ENCODE measurements at regions of chr16 and their contacts with region 1.

Region 1: DNA sequence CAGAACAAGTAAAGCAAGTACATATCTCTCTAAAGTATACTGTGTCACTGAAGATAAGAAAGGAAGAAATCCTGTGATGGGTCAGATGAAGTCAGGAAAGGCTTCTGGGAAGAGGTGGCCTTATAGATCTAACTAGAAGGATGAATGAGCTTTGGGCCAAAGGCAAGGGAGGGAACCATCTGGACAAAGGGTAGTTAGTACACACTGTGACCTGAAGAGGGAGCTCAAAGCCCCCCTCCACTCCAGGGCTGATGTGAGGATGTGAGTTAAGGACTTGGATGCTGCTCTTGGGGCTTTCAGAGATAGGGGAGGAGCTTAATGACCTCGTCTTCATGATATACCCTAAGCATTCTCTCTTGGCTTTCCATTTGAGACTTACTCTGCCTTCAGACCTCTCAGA is 185.3 kb upstream of the CACNG3 start:
- DNase-seq: no peak
- ATAC-seq: peak; percentile 80
- H3K4me3 Mint-ChIP-seq: no peak overlapping the region
- H3K27ac Mint-ChIP-seq: peak overlapping the region; percentile 98
- H3K4me1 Mint-ChIP-seq: peaks cover 55% of the 10 kb centered on the region
- H3K27me3 Mint-ChIP-seq: no peaks in the 10 kb centered on the region
- CTCF ChIP-seq: peak; percentile 19

Region 2: GRCh38 chr16:23678430-23679273 is 392.2 kb before region 1 on chr16 and contains the start of gene PLK1:
- CTCF ChIA-PET with region 1: no interaction called
- POLR2A ChIA-PET with region 1: no interaction called
- intact Hi-C with region 1: no loop called
- DNase-seq: peak; percentile 54
- ATAC-seq: peak; percentile 93
- H3K4me3 Mint-ChIP-seq: peak within 1 kb of the TSS; percentile 85
- H3K27ac Mint-ChIP-seq: no peak within 1 kb of the TSS
- H3K4me1 Mint-ChIP-seq: peaks cover 17% of the 10 kb centered on the region
- H3K27me3 Mint-ChIP-seq: no peaks in the 10 kb centered on the region
- CTCF ChIP-seq: no peak
- total RNA-seq, gene PLK1: 2.3 and 3.9 TPM in 2 replicates

Region 3: GRCh38 chr16:24041826-24042631 is 28.8 kb before region 1 on chr16:
- CTCF ChIA-PET with region 1: interaction called, 7 read pairs
- POLR2A ChIA-PET with region 1: interaction called, 3 read pairs
- intact Hi-C with region 1: loop called (anchors 1 kb)
- DNase-seq: peak; percentile 64
- ATAC-seq: peak; percentile 93
- H3K4me3 Mint-ChIP-seq: no peak overlapping the region
- H3K27ac Mint-ChIP-seq: peak overlapping the region; percentile 8
- H3K4me1 Mint-ChIP-seq: peaks cover 8% of the 10 kb centered on the region
- H3K27me3 Mint-ChIP-seq: no peaks in the 10 kb centered on the region
- CTCF ChIP-seq: peak; percentile 57

Region 4: DNA sequence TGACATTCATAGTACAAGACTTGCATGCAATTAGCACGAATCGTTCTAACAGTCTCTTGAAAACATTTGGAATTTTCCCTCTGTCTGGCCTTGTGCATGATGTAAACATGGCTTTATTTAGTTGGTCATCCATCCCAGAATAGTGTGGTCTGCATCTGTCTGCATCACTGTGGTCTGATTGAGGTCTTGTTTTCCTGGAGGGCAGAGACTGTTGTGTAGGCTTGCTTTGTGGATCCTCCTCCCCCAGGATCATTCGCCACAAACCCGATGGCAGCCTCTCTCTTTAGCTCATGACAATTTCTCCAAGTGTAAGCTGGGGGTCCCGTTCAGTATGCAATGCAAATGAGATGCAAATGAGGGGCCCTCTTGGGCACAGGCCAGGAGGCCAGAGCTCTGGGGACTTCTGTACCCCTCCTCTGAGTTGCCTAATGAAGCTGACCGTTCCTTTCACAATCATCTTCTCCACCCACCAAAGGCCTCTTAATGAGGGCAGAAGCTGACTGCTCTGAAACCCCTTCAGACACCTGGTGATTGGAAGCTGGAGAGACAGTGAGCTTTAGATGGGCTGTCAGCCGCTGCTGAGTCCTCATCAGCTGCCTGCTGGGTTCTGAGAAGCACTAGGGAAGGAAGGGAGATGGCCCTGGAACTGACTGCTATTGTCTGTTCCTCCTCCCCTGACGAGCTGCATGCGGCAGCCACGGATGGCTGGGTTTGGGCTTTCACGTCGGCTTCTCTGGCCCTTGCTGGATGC is 15.9 kb before region 1 on chr16:
- CTCF ChIA-PET with region 1: interaction called, 10 read pairs
- POLR2A ChIA-PET with region 1: no interaction called
- intact Hi-C with region 1: no loop called
- DNase-seq: no peak
- ATAC-seq: no peak
- H3K4me3 Mint-ChIP-seq: no peak overlapping the region
- H3K27ac Mint-ChIP-seq: peak overlapping the region; percentile 21
- H3K4me1 Mint-ChIP-seq: peaks cover 15% of the 10 kb centered on the region
- H3K27me3 Mint-ChIP-seq: no peaks in the 10 kb centered on the region
- CTCF ChIP-seq: no peak

Region 5: DNA sequence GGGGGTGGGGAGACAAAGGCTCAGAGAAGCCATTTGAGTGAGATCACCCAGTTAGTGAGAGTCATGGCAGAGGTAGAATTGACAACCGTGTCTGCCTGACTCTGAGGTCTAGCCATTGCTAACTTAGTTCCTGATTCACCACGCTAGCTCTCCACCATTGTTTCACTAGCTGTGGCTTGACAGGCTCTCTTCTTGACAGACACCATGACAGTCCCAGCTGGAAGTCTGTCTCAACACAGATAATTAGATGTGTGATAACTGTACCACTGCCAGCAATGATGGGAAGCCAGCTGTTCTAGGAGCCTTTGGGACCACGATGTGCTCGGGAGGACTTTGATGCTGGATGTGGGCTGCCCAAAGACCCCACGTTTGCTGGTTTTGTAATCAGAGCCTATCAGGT is 14.8 kb after region 1 on chr16:
- CTCF ChIA-PET with region 1: interaction called, 12 read pairs
- POLR2A ChIA-PET with region 1: no interaction called
- intact Hi-C with region 1: no loop called
- DNase-seq: no peak
- ATAC-seq: no peak
- H3K4me3 Mint-ChIP-seq: no peak overlapping the region
- H3K27ac Mint-ChIP-seq: peak overlapping the region; percentile 41
- H3K4me1 Mint-ChIP-seq: peaks cover 13% of the 10 kb centered on the region
- H3K27me3 Mint-ChIP-seq: no peaks in the 10 kb centered on the region
- CTCF ChIP-seq: no peak

Region 6: DNA sequence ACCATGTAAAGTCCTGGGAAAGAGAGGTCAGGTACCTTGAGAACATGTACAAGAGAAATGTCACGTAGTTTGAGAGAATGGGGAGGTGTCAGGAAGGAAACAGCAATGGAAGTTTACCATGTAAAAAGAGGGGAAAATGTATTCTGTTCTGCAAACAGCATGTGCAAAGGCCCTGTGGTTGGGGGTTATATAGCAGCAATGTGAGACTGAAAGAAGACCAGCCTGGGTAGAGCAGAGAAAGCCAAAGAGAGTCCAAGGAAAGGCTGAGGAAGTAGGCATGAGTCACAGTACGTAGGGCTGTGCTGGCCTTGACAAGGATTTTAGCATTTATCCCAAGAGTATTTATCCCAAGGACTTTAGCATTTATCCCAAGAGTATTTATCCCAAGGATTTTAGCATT is 44.0 kb after region 1 on chr16:
- CTCF ChIA-PET with region 1: interaction called, 4 read pairs
- POLR2A ChIA-PET with region 1: no interaction called
- intact Hi-C with region 1: loop called (anchors 5 kb)
- DNase-seq: no peak
- ATAC-seq: no peak
- H3K4me3 Mint-ChIP-seq: no peak overlapping the region
- H3K27ac Mint-ChIP-seq: no peak overlapping the region
- H3K4me1 Mint-ChIP-seq: no peaks in the 10 kb centered on the region
- H3K27me3 Mint-ChIP-seq: no peaks in the 10 kb centered on the region
- CTCF ChIP-seq: no peak

Region 7: GRCh38 chr16:24151482-24151939 is 80.7 kb after region 1 on chr16:
- CTCF ChIA-PET with region 1: interaction called, 3 read pairs
- POLR2A ChIA-PET with region 1: no interaction called
- intact Hi-C with region 1: loop called (anchors 5 kb)
- DNase-seq: no peak
- ATAC-seq: no peak
- H3K4me3 Mint-ChIP-seq: no peak overlapping the region
- H3K27ac Mint-ChIP-seq: peak overlapping the region; percentile 51
- H3K4me1 Mint-ChIP-seq: peaks cover 27% of the 10 kb centered on the region
- H3K27me3 Mint-ChIP-seq: no peaks in the 10 kb centered on the region
- CTCF ChIP-seq: no peak

Region 8: DNA sequence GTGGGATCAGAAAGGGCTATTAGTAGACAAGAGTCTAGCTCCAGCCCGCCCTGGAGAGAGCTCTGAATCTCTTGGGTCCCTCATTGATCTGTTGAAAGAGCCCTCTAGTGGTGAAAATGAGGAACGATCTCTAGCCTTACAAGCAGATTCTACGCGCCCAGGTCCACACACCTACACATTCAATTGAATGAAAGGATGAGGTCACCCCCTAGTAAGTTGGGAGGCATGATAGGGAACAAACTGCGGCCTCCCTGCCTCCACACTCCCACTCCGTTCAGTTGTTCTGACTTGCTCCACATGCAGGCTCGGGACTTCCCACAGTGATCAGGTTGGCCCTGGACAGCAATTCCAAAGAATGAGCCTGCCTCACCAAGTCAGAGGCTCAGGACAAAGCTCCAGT is 182.3 kb after region 1 on chr16:
- CTCF ChIA-PET with region 1: interaction called, 64 read pairs
- POLR2A ChIA-PET with region 1: interaction called, 13 read pairs
- intact Hi-C with region 1: loop called (anchors 1 kb)
- DNase-seq: no peak
- ATAC-seq: peak; percentile 66
- H3K4me3 Mint-ChIP-seq: no peak overlapping the region
- H3K27ac Mint-ChIP-seq: no peak overlapping the region
- H3K4me1 Mint-ChIP-seq: peaks cover 7% of the 10 kb centered on the region
- H3K27me3 Mint-ChIP-seq: peaks cover 54% of the 10 kb centered on the region
- CTCF ChIP-seq: no peak

Measured in activated B cell treated with CpG ODN at 0.5 μM for 24 hours (primary cell).